Activated CD8-positive, alpha-beta T cell treated with anti-CD3 and anti-CD28 coated beads for 36 hours (primary cell): ENCODE measurements at regions of chr11 and their contacts with region 1.

Region 1: GRCh38 chr11:12174477-12175143 is 64.2 kb downstream of the MICAL2 start:
- DNase-seq: peak; percentile 26
- ATAC-seq: peak; percentile 64
- H3K4me3 Mint-ChIP-seq: peak overlapping the region; percentile 54
- H3K27ac Mint-ChIP-seq: peak overlapping the region; percentile 99
- H3K4me1 Mint-ChIP-seq: peaks cover 68% of the 10 kb centered on the region
- H3K27me3 Mint-ChIP-seq: no peaks in the 10 kb centered on the region
- CTCF ChIP-seq: no peak

Region 2: GRCh38 chr11:12043959-12044819 is 130.4 kb before region 1 on chr11:
- CTCF ChIA-PET with region 1: no interaction called
- POLR2A ChIA-PET with region 1: no interaction called
- intact Hi-C with region 1: no loop called
- DNase-seq: peak; percentile 74
- ATAC-seq: peak; percentile 81
- H3K4me3 Mint-ChIP-seq: no peak overlapping the region
- H3K27ac Mint-ChIP-seq: no peak overlapping the region
- H3K4me1 Mint-ChIP-seq: peaks cover 4% of the 10 kb centered on the region
- H3K27me3 Mint-ChIP-seq: peaks cover 2% of the 10 kb centered on the region
- CTCF ChIP-seq: peak; percentile 94

Region 3: DNA sequence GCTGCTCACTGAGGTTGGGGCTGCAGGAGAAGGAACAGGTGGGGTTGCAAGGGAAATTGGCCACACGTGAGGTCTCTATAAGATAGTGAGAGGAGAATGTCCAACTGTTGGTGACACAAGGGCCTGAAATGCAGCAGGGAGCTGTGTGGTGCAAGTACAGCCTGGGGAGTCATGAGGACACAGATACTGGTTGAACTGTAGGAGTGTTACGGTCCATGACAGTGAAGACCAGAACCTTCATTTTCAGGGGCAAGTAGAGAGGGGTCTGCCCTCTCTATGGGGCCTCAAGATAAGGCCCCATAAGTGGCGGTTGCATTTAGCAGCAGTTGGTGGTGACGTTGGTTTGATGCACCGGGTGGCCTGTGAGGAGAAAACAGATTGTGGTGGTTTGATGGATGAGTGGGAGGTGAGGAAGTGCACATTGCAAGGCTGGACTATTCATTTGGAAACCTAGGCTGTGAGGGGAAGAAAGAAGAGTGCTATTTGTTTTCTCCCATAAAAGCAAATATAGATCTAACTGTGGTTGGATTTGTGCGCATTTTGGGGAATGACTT is 24.9 kb before region 1 on chr11:
- CTCF ChIA-PET with region 1: interaction called, 5 read pairs
- POLR2A ChIA-PET with region 1: interaction called, 8 read pairs
- intact Hi-C with region 1: loop called (anchors 2 kb)
- DNase-seq: peak; percentile 85
- ATAC-seq: peak; percentile 56
- H3K4me3 Mint-ChIP-seq: peak overlapping the region; percentile 9
- H3K27ac Mint-ChIP-seq: peak overlapping the region; percentile 94
- H3K4me1 Mint-ChIP-seq: peaks cover 60% of the 10 kb centered on the region
- H3K27me3 Mint-ChIP-seq: no peaks in the 10 kb centered on the region
- CTCF ChIP-seq: no peak

Region 4: DNA sequence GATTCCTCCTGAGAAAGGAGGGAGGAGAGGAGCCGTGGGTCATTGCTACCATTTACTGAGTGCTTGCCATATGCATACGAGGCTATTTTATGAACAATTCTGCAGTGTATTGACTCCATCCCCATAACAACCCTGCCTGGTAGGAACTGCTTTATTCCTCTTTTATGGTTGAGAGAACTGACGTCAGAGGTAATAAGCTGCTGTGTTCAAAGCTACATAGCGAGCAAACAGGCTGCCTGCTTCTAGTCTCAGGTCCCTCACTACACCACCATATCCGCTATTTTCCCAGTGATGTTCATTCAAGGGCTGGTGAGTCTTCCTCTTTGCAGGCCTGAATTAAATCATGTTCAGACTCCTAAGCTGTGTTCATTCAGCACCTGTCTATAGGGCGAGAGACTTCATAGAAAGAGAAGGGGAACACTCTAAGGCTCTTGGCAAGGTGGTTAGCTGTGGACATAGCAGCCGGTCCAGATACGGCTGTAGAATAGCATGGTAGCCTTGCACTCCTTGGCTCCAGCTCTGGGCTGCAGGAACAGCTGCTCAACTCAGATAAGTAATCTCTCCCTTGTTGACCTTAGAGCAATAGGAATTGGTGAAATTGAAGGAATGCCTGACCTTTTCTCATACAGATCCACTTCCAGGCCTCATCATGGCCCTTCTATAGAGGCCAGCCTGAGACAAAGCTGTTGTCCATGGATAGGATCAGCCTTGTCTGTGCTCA is 18.3 kb after region 1 on chr11:
- CTCF ChIA-PET with region 1: interaction called, 3 read pairs
- POLR2A ChIA-PET with region 1: interaction called, 12 read pairs
- intact Hi-C with region 1: no loop called
- DNase-seq: no peak
- ATAC-seq: no peak
- H3K4me3 Mint-ChIP-seq: no peak overlapping the region
- H3K27ac Mint-ChIP-seq: peak overlapping the region; percentile 30
- H3K4me1 Mint-ChIP-seq: peaks cover 75% of the 10 kb centered on the region
- H3K27me3 Mint-ChIP-seq: no peaks in the 10 kb centered on the region
- CTCF ChIP-seq: no peak

Region 5: DNA sequence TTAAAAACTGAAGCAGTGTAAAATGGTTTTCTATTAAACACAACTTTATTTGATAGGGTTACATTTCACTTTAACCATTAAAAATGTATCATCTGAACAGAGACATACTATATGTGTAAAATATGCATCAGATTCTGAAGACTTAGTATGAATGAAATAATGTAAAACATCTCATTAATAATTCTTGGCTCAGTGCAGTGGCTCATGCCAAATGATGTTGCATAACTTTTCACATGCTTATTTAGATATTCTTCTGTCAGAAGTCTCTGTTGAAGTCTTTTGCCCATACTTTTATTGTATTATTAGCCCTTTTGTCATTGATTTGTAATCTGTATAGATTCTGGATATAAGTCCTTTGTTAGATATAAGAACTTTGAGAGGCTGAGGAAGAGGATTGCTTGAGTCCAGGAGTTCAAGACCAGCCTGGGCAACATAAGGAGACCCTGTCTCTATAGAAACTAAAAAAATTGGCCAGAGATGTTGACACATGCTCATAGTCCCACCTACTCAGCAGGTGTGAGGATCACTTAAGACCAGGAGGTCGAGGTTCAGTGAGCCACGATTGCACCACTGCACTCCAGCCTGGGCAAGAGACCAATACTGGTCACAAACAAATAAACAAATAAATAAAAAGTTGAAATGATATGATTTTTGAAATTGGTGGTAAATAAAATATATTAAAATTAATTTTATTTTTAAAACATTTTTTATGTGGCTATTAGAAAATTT is 129.0 kb after region 1 on chr11:
- CTCF ChIA-PET with region 1: no interaction called
- POLR2A ChIA-PET with region 1: no interaction called
- intact Hi-C with region 1: no loop called
- DNase-seq: no peak
- ATAC-seq: no peak
- H3K4me3 Mint-ChIP-seq: no peak overlapping the region
- H3K27ac Mint-ChIP-seq: no peak overlapping the region
- H3K4me1 Mint-ChIP-seq: no peaks in the 10 kb centered on the region
- H3K27me3 Mint-ChIP-seq: no peaks in the 10 kb centered on the region
- CTCF ChIP-seq: no peak